A549 (cell line): ENCODE measurements at regions of chr22 and their contacts with region 1.

Region 1: DNA sequence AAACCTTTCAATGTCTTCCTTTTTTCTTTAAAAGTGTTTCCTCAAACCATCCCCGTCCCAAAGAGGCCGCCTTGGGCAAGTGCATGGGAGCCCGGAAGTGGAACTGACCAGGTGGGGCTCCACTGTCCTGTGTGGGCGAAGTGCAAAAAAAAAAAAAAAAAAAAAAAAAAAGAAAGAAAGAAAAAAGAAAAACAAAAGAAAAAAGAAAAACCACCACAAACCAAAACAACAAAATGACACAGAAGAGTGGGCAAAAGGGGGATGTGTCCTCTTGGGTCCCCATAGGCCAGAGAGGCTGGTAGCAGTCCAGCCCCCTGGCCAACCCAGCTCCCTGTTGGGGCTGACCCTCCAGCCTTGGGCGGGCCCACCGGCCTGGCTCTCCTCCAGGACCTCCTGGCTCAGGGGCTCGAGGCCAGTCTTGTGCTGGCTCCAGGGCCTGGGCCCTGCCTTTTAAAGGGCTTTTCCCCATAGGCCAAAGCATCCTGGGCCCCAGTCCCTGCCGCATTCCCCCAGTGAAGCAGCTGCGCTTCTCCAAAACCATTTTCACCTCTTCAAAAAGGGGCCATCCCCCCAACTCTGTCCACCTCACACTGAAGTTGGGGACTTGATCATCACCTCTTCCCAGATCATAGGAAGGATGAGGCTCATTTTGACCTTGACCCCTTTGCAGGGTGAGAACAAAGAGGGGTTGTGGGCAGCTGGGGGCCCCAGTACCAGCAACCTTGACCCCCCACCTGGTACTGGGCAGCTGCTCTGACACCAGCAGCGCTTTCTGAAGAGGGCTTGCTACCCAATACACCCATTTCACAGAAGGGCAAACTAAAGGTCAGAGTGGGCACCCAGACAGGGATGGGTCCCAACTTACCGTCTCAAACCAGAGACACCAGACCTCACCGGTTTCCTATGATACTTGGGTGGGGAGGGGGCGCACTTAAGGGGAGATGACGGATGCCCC is 9.4 kb downstream of the CBX6 start:
- DNase-seq: no peak
- ATAC-seq: peak in 1 of 2 experiments; percentile 53; a peak in 3 of 6 replicates
- H3K4me3 ChIP-seq: no peak overlapping the region
- H3K27ac ChIP-seq: no peak overlapping the region
- H3K4me1 ChIP-seq: no peaks in the 10 kb centered on the region; the same call in 2 of the 3 replicates
- CTCF ChIP-seq: no peak
- EP300 ChIP-seq: no peak
- POLR2A ChIP-seq: no peak
- RAD21 ChIP-seq: no peak

Region 2: GRCh38 chr22:38824585-38824984 is 38.1 kb before region 1 on chr22:
- CTCF ChIA-PET with region 1: no interaction called
- POLR2A ChIA-PET with region 1: no interaction called
- DNase-seq: peak; percentile 31 to 49
- ATAC-seq: peak; percentile 87
- H3K4me3 ChIP-seq: no peak overlapping the region
- H3K27ac ChIP-seq: no peak overlapping the region
- H3K4me1 ChIP-seq: peaks cover 11% of the 10 kb centered on the region
- CTCF ChIP-seq: no peak
- EP300 ChIP-seq: no peak
- POLR2A ChIP-seq: no peak
- RAD21 ChIP-seq: no peak

Region 3: DNA sequence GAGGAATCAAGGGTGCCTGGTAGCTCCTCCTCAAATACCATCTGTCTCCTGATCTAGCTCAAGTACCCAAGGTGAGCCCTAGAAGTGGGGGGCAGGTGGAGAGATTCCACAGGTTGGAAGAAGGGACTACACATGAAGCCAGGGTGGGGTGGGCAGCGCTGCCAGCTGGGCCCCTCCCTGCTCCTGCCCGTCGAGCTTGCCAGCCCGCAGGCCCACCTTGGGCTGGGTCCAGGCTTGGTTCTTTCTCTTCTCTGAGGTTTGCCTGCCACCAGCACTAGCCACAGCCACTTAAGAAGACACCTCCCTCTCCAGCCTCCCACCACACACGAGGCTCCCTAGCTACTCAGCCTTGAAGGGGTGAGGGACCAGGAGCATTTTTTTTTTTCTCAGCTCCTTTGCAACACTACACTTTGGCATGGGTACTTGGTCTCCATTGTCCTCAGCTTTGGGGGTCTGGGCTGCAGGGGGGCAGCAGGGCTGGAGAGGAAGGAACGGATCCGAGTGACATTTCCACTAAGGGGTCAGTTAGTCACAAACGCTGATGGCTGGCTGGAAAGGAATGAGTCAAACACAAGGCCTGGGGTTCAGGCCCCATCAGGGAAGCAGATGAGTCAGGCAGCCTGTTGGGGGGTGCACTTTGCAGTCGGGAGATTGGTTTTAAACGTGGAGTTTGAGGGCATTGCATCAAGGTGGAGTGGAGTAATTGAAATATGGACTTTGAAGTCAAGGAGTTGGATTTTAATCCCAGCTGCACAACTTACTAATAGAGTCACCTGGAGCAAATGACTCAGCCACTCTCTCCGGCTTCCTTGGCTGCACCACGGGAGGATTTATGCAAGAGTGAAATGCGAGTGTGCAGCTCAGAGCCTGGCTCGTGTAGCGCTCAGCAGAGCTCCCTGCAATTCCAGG is 11.5 kb before region 1 on chr22:
- CTCF ChIA-PET with region 1: interaction called, 7 read pairs
- POLR2A ChIA-PET with region 1: interaction called, 13 read pairs
- DNase-seq: peak; percentile 36 to 59
- ATAC-seq: peak; percentile 79 to 87
- H3K4me3 ChIP-seq: no peak overlapping the region
- H3K27ac ChIP-seq: peak overlapping the region; percentile 56 to 82; a peak in 5 of 6 replicates
- H3K4me1 ChIP-seq: peaks cover 18% of the 10 kb centered on the region
- CTCF ChIP-seq: no peak
- EP300 ChIP-seq: no peak
- POLR2A ChIP-seq: no peak
- RAD21 ChIP-seq: no peak